CD4-positive, alpha-beta T cell (primary cell): ENCODE measurements at regions of chr11 and their contacts with region 1.

Region 1: GRCh38 chr11:119196833-119197483 is 9.2 kb upstream of the CBL start:
- DNase-seq: peak; percentile 36 to 90 (median 64)
- ATAC-seq: peak; percentile 99
- H3K4me3 ChIP-seq: no peak overlapping the region
- H3K4me3 Mint-ChIP-seq: no peak overlapping the region
- H3K27ac ChIP-seq: no peak overlapping the region
- H3K27ac Mint-ChIP-seq: no peak overlapping the region
- H3K4me1 ChIP-seq: no peaks in the 10 kb centered on the region
- H3K4me1 Mint-ChIP-seq: peaks cover 5% of the 10 kb centered on the region
- H3K27me3 ChIP-seq: no peaks in the 10 kb centered on the region
- H3K27me3 Mint-ChIP-seq: no peaks in the 10 kb centered on the region
- CTCF ChIP-seq: peak; percentile 85

Region 2: DNA sequence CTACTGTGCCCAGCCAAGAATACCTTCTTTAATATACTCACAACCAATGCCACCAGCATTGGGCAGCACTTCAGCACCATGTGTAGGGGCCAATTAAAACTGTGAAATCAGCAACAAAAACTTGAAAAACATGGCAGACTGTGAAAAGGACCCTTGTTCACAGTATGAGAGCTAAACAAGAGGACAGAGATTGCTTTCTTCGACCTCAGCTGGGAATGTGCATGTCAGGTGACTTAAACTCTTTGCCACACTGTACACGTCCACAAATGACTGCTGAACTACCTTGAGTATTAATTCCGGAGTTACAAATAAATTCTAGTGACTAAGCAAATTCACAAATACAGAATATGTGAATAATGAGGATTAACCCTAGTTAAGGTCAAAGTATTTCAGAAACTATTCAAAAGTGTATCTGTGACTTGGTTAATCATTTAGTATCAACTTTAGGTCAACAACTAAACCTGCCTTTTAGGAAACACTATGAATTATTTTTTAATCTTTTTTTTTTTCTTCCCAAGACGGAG is 439.0 kb before region 1 on chr11:
- CTCF ChIA-PET with region 1: no interaction called
- POLR2A ChIA-PET with region 1: no interaction called
- intact Hi-C with region 1: no loop called
- DNase-seq: no peak
- ATAC-seq: no peak
- H3K4me3 ChIP-seq: no peak overlapping the region
- H3K4me3 Mint-ChIP-seq: no peak overlapping the region
- H3K27ac ChIP-seq: no peak overlapping the region
- H3K27ac Mint-ChIP-seq: peak overlapping the region; percentile 54
- H3K4me1 ChIP-seq: no peaks in the 10 kb centered on the region
- H3K4me1 Mint-ChIP-seq: peaks cover 12% of the 10 kb centered on the region
- H3K27me3 ChIP-seq: no peaks in the 10 kb centered on the region
- H3K27me3 Mint-ChIP-seq: no peaks in the 10 kb centered on the region
- CTCF ChIP-seq: no peak

Region 3: DNA sequence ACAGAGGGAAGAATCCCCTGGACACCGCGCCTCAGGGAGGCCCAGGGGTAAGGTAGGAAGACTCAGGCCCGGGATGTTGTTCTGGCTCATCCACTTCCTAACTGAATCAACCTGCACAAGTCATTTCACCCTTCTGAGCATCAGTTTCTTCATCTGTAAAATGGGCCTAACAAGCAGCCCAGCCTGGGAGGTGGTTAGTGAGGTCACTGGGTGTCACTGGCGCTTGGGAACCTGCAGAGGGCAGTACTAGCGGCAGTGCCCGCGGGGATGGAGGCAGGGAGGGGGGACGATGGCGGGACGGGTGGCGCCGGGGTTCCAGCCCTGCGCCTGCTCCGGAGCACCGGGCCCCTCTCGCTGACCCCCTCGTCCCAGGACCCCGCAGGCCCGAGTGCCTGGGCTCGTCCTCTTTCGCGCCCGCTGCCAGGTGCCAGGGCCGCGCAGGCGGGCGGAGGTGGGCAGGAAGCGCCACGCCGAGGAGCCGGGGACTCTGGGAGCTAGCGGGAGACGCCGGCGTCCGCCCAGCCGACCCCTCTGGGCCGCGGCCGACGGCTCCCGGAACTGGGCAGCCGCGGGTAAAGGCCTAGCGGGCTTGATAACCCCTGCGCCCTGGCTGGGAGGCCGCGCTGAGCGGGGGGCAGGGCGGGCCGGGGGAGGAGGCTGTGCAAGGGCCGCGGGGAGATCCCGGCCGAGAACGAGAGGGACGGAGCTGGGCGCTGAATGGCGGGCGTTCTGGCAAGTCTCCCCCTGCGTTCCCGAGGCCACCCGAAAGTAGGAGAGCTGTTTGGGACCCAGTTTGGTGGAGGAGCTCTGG is 28.3 kb before region 1 on chr11 and contains the start of gene NLRX1:
- CTCF ChIA-PET with region 1: no interaction called
- POLR2A ChIA-PET with region 1: interaction called, 3 read pairs
- intact Hi-C with region 1: loop called (anchors 1 to 2 kb)
- DNase-seq: peak; percentile 72 to 91 (median 78)
- ATAC-seq: peak; percentile 98
- H3K4me3 ChIP-seq: peak within 1 kb of the TSS; percentile 73
- H3K4me3 Mint-ChIP-seq: peak within 1 kb of the TSS; percentile 91
- H3K27ac ChIP-seq: peak within 1 kb of the TSS; percentile 36 to 56
- H3K27ac Mint-ChIP-seq: peak within 1 kb of the TSS; percentile 82
- H3K4me1 ChIP-seq: peaks cover 15% of the 10 kb centered on the region
- H3K4me1 Mint-ChIP-seq: peaks cover 6% of the 10 kb centered on the region
- H3K27me3 ChIP-seq: no peaks in the 10 kb centered on the region
- H3K27me3 Mint-ChIP-seq: no peaks in the 10 kb centered on the region
- CTCF ChIP-seq: peak; percentile 92
- total RNA-seq, gene NLRX1: 4.2 to 5.4 TPM